Adrenal gland (tissue), 19 donors: ENCODE measurements at regions of chr11 and their contacts with region 1.

Region 1: GRCh38 chr11:14258221-14258935 is 100.6 kb downstream of the RRAS2 start:
- DNase-seq: no peak
- H3K4me3 ChIP-seq: no peak overlapping the region
- H3K27ac ChIP-seq: no peak overlapping the region
- H3K4me1 ChIP-seq: no peaks in the 10 kb centered on the region
- H3K27me3 ChIP-seq: no peaks in the 10 kb centered on the region
- CTCF ChIP-seq: no peak
- POLR2A ChIP-seq: no peak

Region 2: DNA sequence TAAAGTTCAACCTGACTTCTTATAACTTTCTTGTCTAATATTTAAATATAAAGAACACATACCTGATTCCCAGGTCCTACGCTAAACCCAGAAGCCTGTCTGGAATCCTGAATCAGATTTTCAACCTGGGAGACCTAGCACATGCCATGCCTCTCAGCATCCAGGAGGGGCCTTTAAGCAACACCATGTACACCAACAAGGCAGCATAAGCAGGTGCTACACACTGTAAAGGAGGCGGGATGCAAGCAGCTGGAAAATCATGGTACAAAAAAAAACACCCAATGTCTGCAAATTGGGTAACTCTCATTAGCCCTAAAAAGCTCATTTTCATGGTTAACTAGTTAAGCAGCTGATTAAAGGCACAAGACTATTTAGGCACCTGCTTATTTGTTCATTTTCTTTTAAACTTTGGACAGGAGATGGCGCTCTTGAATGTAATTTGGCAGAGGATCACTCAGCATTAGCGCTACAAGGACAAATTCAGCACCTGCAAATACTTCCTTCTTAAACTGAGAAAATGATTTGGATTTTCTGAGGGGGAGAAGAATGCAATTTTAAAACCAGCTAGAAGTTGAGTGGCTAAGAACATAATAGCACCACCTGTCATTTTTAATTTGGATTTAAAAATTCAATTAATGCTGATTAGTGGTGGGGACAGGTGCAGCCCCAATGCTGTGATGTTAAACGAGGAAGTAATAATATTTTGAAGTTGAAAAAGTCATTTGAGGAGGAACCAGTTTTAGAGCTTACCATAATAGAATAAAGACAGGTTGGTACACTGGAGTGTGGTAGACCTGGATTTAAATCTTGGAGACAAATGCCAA is 485.9 kb before region 1 on chr11:
- intact Hi-C with region 1: loop called in 1 of 2 experiments (anchors 5 kb)
- DNase-seq: peak in 5 of 7 donors; percentile 13 to 23 (median 21)
- H3K4me3 ChIP-seq: no peak overlapping the region
- H3K27ac ChIP-seq: no peak overlapping the region
- H3K4me1 ChIP-seq: no peaks in the 10 kb centered on the region
- H3K27me3 ChIP-seq: no peaks in the 10 kb centered on the region
- CTCF ChIP-seq: peak; percentile 37 to 56 (median 47)
- POLR2A ChIP-seq: no peak